K562 (cell line): ENCODE measurements at regions of chr6 and their contacts with region 1.

Region 1: GRCh38 chr6:144013486-144013909 is 5.4 kb upstream of the PLAGL1 start:
- DNase-seq: peak; percentile 61 to 88 (median 64)
- ATAC-seq: peak; percentile 92
- H3K4me3 ChIP-seq: no peak overlapping the region
- H3K27ac ChIP-seq: no peak overlapping the region
- H3K4me1 ChIP-seq: peaks cover 0 to 1% of the 10 kb centered on the region in 2 experiments; a peak in 1 of 5 replicates
- H3K27me3 ChIP-seq: peaks cover 0 to 2% of the 10 kb centered on the region in 2 experiments; a peak in 1 of 5 replicates
- CTCF ChIP-seq: peak; percentile 93 to 97 (median 93)
- EP300 ChIP-seq: no peak
- POLR2A ChIP-seq: no peak
- RAD21 ChIP-seq: peak; percentile 98 to 99

Region 2: DNA sequence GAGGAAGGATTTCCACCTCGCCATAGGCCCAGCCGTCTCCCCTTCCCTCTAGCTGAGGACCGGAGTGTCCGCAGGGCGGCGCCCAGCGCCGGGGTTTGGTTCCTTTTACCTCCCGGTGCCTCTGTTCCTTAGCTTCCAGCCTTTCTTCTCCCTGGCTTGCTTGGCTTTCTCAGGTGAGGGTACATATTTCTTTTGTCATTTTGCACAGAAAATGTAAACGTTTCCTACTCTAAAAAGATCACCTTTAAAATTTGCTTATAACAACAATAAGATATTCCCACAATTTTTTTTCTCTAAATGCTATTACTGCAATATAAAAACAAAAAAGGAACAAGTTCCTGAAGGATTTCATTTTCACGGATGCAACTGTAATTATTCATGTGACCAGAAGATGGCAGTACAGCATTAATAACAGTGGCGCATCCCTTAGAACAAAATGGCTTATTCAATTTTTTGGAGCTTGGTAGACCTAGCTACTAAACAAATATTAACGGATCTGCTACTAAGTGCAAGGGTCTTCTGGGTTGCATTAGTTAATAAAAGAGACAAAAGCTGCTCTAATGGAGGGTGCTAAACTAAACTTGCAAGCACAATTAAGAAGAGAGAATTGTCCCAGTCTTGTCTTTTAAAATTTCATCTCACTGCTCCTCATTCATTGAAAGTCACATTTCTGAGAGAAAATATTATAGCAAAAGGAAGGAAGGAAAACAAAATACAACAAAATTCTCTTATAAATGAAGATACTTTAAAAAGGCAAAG is 1538.8 kb before region 1 on chr6:
- CTCF ChIA-PET with region 1: no interaction called
- POLR2A ChIA-PET with region 1: no interaction called
- in situ Hi-C with region 1: no loop called
- intact Hi-C with region 1: loop called (anchors 10 kb)
- DNase-seq: peak; percentile 52 to 60 (median 58)
- ATAC-seq: peak; percentile 89
- H3K4me3 ChIP-seq: no peak overlapping the region
- H3K27ac ChIP-seq: no peak overlapping the region
- H3K4me1 ChIP-seq: no peaks in the 10 kb centered on the region
- H3K27me3 ChIP-seq: no peaks in the 10 kb centered on the region
- CTCF ChIP-seq: peak; percentile 61 to 85 (median 64); a peak in 5 of 6 replicates
- EP300 ChIP-seq: no peak
- POLR2A ChIP-seq: no peak
- RAD21 ChIP-seq: peak; percentile 88 to 91

Region 3: GRCh38 chr6:143575440-143575839 is 438.1 kb before region 1 on chr6:
- CTCF ChIA-PET with region 1: interaction called, 32 read pairs
- POLR2A ChIA-PET with region 1: interaction called, 4 read pairs
- in situ Hi-C with region 1: loop called (anchors 5 kb)
- intact Hi-C with region 1: loop called (anchors 1 kb)
- DNase-seq: peak; percentile 79 to 85 (median 84)
- ATAC-seq: peak; percentile 95
- H3K4me3 ChIP-seq: no peak overlapping the region
- H3K27ac ChIP-seq: no peak overlapping the region
- H3K4me1 ChIP-seq: no peaks in the 10 kb centered on the region
- H3K27me3 ChIP-seq: peaks cover 0 to 3% of the 10 kb centered on the region in 2 experiments; a peak in 1 of 5 replicates
- CTCF ChIP-seq: peak; percentile 86 to 97 (median 94)
- EP300 ChIP-seq: no peak
- POLR2A ChIP-seq: no peak
- RAD21 ChIP-seq: peak; percentile 99

Region 4: DNA sequence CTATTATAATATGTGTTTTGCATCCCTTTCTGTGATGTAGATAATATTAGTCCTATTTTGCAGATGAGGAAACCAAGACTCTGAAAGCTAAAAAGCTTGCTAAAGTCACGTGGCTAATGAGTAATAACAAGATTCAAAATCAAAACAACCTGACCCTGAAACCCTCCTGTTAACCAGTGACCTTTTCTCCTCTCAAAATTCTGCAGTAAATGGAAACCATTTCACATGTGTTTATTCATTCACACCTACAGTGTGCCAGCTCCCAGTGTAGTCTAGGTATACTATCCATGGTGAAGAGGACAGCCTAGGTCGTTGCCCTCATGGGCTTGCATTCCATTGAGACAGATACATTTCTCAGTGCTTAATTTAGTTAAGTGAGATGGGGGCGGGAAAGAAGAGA is 366.3 kb before region 1 on chr6:
- CTCF ChIA-PET with region 1: no interaction called
- POLR2A ChIA-PET with region 1: no interaction called
- in situ Hi-C with region 1: no loop called
- intact Hi-C with region 1: loop called (anchors 2 kb)
- DNase-seq: no peak
- ATAC-seq: no peak
- H3K4me3 ChIP-seq: no peak overlapping the region
- H3K27ac ChIP-seq: no peak overlapping the region
- H3K4me1 ChIP-seq: peaks cover 3 to 5% of the 10 kb centered on the region in 2 experiments; a peak in 3 of 5 replicates
- H3K27me3 ChIP-seq: no peaks in the 10 kb centered on the region; a peak in 1 of 5 replicates
- CTCF ChIP-seq: no peak
- EP300 ChIP-seq: no peak
- POLR2A ChIP-seq: no peak
- RAD21 ChIP-seq: no peak

Region 5: DNA sequence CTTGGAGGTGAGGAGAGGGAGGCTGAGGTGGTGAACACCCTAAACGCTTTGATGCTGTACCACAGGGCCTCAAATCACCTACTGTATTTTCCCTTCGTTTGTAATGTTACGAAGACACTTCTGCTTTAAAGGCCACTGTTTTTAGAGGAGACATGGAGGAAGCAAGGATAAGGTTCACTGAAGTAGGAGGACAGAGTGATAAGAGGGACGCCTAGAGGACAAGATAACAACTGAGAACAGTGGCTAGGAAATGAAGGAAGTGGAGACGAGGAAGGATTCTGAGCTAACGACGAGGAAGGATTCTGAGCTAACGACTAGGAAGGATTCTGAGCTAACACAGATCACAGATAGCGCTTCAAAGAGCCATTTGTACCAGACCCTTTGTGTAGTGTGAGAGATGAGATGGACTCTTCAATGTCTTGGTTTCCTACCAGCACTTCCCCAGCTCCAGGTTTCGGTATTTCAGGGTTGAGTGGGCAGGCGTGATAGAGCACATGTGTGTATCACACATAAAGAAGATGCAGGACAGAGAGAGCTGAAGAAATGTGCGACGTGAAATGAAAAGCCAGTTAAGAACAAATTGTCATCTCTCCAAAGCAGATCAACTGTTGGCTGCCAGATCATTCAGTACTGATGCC is 74.4 kb after region 1 on chr6:
- CTCF ChIA-PET with region 1: no interaction called
- POLR2A ChIA-PET with region 1: no interaction called
- in situ Hi-C with region 1: no loop called
- intact Hi-C with region 1: loop called (anchors 2 kb)
- DNase-seq: peak; percentile 38 to 72 (median 54)
- ATAC-seq: peak; percentile 89
- H3K4me3 ChIP-seq: no peak overlapping the region
- H3K27ac ChIP-seq: peak overlapping the region; percentile 59
- H3K4me1 ChIP-seq: peaks cover 0 to 13% of the 10 kb centered on the region in 2 experiments; a peak in 4 of 5 replicates
- H3K27me3 ChIP-seq: no peaks in the 10 kb centered on the region
- CTCF ChIP-seq: peak; percentile 25 to 61 (median 54); a peak in 5 of 6 replicates
- EP300 ChIP-seq: no peak
- POLR2A ChIP-seq: no peak
- RAD21 ChIP-seq: peak; percentile 77 to 79

Region 6: DNA sequence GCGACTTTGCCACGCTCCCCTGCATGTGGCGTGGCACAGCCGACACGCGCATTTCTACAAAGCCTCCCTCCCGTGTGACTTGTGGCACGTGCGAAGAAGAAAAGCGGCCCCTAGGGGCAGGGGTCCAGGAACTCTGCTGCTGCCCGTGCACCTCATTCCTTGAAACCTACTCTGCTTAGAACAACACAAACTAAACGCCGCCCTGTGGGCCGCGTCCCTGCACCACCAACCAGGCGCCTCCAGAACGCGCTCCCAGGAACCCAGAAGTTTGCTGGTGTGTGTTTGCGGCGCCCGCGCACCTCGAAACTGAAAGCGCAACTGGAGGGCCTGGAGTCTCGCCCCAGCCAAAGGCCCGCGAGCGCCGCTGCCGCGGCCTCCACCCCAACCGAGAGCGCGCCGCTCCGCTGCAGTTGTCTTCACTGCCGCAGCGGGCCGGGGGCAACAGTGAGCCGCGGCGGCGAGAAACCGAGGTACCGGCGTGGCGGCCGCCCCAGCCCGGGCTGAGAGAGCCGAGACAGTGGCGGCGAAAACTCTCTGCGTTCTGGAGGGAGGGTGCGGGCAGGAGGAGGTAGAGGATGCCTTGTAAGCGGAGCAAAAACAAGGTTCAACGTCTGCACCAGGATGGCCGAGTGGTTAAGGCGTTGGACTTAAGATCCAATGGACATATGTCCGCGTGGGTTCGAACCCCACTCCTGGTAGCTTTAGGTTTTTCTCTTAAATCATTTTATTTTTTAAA is 202.6 kb after region 1 on chr6:
- CTCF ChIA-PET with region 1: no interaction called
- POLR2A ChIA-PET with region 1: no interaction called
- in situ Hi-C with region 1: loop called (anchors 5 kb)
- intact Hi-C with region 1: no loop called
- DNase-seq: peak; percentile 89 to 96 (median 92)
- ATAC-seq: peak; percentile 94
- H3K4me3 ChIP-seq: peak overlapping the region; percentile 75
- H3K27ac ChIP-seq: peak overlapping the region; percentile 90
- H3K4me1 ChIP-seq: peaks cover 14% of the 10 kb centered on the region in 2 experiments
- H3K27me3 ChIP-seq: no peaks in the 10 kb centered on the region
- CTCF ChIP-seq: peak; percentile 75 to 90 (median 76)
- EP300 ChIP-seq: peak; percentile 78
- POLR2A ChIP-seq: peak; percentile 67
- RAD21 ChIP-seq: peak; percentile 25 to 56; a peak in 3 of 4 replicates